Head of caudate nucleus (tissue), 42 donors: ENCODE measurements at regions of chr4 and their contacts with region 1.

Region 1: GRCh38 chr4:158253350-158253980 is 43.2 kb downstream of the TMEM144 start:
- DNase-seq: peak in 38 of 42 donors; percentile 18 to 92 (median 70)

Region 2: DNA sequence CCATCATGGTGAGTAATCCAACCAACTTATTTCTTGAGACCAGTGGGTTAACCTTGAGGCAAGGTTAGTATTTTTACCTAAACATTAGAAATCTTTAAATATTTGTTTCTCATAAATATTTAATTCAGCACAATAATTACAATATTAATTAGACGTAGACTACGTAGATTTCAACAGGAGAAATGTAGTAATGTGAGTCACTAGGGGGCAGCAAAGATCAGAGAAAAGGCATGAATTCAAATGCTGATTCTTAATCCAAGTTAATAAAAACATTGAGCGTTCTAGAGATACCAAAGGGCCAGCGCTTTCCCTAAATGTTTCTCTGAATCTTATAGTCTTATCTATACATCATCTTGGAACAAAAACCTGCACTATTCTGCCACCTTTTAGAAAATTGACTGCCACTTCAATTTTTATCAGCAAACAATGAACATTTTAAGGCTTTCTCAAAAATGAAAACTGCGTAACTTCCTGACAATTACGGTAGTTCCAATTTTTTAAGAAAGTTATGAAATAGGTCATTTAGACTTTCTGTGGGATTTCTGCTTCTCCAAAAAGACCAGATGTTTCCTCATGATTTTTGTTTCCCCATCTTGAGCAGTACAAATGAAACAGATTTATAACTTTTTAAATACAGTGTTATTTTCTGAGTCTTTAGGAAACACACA is 261.3 kb before region 1 on chr4:
- intact Hi-C with region 1: loop called (anchors 10 kb)
- DNase-seq: peak in 22 of 42 donors; percentile 4 to 89 (median 68)

Region 3: DNA sequence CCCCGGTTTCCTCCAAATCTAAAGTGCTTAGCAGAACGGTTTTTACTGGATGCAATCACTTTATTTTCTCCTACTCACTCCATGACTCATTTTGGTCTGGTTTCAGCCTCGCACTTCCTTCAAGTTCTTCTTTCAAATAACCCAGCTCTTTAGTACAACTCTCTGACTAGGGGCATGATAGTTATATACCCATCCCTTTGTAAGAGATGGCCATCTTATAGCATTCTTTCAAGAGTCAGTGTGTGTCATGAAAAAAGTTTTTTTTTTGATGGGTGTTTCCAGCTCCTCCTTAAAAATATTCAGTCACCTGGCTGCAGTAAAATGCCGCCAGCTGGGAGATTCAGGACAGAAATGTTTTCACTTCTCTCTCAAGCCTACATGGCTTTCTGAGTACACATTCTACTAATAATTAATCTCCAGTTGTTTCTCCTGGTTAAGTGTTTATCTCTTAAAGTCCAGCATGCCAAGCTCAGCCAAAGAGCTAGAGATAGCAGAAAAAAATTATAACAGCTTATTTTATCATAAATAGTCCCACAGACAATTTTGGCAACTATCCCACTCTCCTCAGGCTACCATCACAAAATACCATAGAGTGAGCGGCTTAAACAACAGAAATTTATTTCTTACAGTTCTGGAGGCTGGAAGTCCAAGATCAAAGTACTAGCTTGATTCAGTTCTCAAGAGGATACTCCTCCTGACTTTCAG is 219.9 kb before region 1 on chr4:
- intact Hi-C with region 1: no loop called
- DNase-seq: no peak

Region 4: DNA sequence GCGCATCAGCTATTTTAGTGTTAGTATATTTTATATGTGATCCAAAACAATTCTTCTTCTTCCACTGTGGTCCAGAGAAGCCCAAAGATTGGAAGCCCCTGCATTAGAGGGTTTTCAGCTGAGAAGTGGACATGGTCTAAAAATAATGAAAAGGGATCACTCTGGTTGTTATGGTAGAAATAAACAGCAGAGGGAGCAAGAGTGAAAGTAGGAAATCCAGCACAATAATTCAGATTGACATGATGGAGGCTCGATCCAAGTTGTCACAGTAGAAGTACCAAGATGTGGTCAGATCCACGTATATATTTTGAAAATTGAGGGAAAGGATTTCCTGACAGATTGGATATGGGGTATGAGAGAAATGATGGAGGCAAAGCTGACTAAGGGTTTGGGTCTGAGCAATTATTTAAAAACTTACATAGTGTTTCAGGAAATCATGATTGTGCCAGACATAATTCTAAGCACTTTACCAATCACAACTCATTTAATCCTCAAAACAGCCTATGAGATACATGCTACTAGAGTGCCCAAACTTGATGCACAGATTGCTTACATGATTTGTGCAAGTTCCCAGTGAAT is 60.2 kb before region 1 on chr4:
- intact Hi-C with region 1: loop called (anchors 5 kb)
- DNase-seq: peak in 2 of 42 donors; percentile 50 to 69